ENCODE measurements at regions of chr5 and their contacts with region 1.

Region 1: DNA sequence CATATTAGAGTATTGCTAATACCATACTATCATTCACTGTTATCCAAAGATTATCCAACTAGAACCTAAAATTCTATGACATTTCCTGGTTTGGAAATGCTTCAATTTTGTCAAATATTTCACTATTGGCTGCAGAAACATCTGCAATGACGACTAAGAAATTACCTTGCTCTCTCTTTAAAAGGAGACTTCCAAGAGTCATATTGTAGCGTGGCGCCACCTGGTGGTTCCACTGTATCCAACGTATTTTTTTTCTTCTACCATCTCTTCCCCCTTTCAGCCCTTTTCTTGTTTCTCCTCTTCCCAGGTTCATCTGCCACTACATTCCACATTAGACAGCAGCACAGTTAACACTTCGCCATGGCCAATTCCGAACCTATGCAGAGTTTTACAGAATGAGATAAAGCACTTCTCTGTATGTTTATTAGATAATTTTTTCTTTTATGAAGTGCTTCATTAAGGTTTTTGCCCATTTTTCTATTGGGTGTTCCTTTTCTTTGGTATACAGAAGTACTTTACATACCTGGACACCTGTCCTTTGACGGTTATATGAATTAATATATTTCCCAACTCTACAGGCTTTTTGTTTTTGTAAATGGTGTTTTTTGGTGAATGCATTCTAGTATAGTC is 153.5 kb downstream of the CDC42SE2 start:
- DNase-seq: peak; percentile 66 to 91 (median 85)
- ATAC-seq: peak; percentile 74
- H3K4me3 ChIP-seq: no peak overlapping the region
- H3K4me3 Mint-ChIP-seq: peak overlapping the region; percentile 64
- H3K27ac ChIP-seq: peak overlapping the region in 1 of 2 experiments; percentile 32
- H3K27ac Mint-ChIP-seq: peak overlapping the region; percentile 91
- H3K4me1 ChIP-seq: peaks cover 26% of the 10 kb centered on the region
- H3K4me1 Mint-ChIP-seq: peaks cover 45% of the 10 kb centered on the region
- H3K27me3 ChIP-seq: no peaks in the 10 kb centered on the region
- H3K27me3 Mint-ChIP-seq: no peaks in the 10 kb centered on the region
- CTCF ChIP-seq: peak; percentile 95

Region 2: GRCh38 chr5:130109152-130109551 is 1308.2 kb before region 1 on chr5:
- CTCF ChIA-PET with region 1: no interaction called
- POLR2A ChIA-PET with region 1: no interaction called
- intact Hi-C with region 1: loop called in 1 of 2 experiments (anchors 2 kb)
- DNase-seq: peak in 2 of 9 experiments; percentile 15 to 26
- ATAC-seq: no peak
- H3K4me3 ChIP-seq: no peak overlapping the region
- H3K4me3 Mint-ChIP-seq: no peak overlapping the region
- H3K27ac ChIP-seq: no peak overlapping the region
- H3K27ac Mint-ChIP-seq: no peak overlapping the region
- H3K4me1 ChIP-seq: no peaks in the 10 kb centered on the region
- H3K4me1 Mint-ChIP-seq: no peaks in the 10 kb centered on the region
- H3K27me3 ChIP-seq: no peaks in the 10 kb centered on the region
- H3K27me3 Mint-ChIP-seq: no peaks in the 10 kb centered on the region
- CTCF ChIP-seq: no peak

Region 3: GRCh38 chr5:131109540-131110255 is 307.7 kb before region 1 on chr5:
- CTCF ChIA-PET with region 1: interaction called, 5 read pairs
- POLR2A ChIA-PET with region 1: no interaction called
- intact Hi-C with region 1: loop called in 1 of 2 experiments (anchors 1 kb)
- DNase-seq: peak in 5 of 9 experiments; percentile 13 to 61 (median 24)
- ATAC-seq: peak; percentile 80
- H3K4me3 ChIP-seq: no peak overlapping the region
- H3K4me3 Mint-ChIP-seq: no peak overlapping the region
- H3K27ac ChIP-seq: no peak overlapping the region
- H3K27ac Mint-ChIP-seq: no peak overlapping the region
- H3K4me1 ChIP-seq: peaks cover 3% of the 10 kb centered on the region
- H3K4me1 Mint-ChIP-seq: peaks cover 4% of the 10 kb centered on the region
- H3K27me3 ChIP-seq: no peaks in the 10 kb centered on the region
- H3K27me3 Mint-ChIP-seq: no peaks in the 10 kb centered on the region
- CTCF ChIP-seq: peak; percentile 96

Region 4: GRCh38 chr5:131209506-131210150 is 207.7 kb before region 1 on chr5:
- CTCF ChIA-PET with region 1: no interaction called
- POLR2A ChIA-PET with region 1: no interaction called
- intact Hi-C with region 1: loop called in 1 of 2 experiments (anchors 5 kb)
- DNase-seq: peak; percentile 14 to 93 (median 55)
- ATAC-seq: peak; percentile 94
- H3K4me3 ChIP-seq: peak overlapping the region; percentile 2 to 13
- H3K4me3 Mint-ChIP-seq: peak overlapping the region; percentile 72
- H3K27ac ChIP-seq: peak overlapping the region; percentile 51 to 83
- H3K27ac Mint-ChIP-seq: peak overlapping the region; percentile 97
- H3K4me1 ChIP-seq: peaks cover 61% of the 10 kb centered on the region
- H3K4me1 Mint-ChIP-seq: peaks cover 60% of the 10 kb centered on the region
- H3K27me3 ChIP-seq: no peaks in the 10 kb centered on the region
- H3K27me3 Mint-ChIP-seq: no peaks in the 10 kb centered on the region
- CTCF ChIP-seq: no peak

Region 5: DNA sequence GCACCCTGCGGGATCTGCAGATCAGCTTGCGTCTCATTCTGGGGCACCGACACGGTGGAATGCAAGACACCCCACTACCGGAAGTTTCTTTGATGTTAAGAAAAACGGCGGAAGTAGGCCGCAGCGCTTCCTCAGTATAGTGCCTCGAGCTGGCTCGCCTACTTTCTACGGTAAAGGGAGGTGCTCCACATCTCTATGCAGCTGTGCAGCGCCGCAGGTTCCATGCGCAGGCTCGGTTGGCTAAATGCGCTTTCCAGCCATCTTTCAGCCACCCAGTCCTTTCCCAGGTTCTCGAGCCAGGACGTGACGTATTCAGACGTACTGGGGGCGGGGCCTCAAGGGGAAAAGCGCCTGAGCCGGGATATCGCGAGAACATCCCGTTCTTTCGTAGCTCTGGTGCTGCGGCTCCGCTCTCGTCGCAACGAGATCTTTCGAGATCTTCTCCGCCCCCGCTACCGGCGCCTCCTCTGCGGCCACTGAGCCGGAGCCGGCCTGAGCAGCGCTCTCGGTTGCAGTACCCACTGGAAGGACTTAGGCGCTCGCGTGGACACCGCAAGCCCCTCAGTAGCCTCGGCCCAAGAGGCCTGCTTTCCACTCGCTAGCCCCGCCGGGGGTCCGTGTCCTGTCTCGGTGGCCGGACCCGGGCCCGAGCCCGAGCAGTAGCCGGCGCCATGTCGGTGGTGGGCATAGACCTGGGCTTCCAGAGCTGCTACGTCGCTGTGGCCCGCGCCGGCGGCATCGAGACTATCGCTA is 1634.4 kb after region 1 on chr5 and contains the start of gene HSPA4:
- CTCF ChIA-PET with region 1: no interaction called
- POLR2A ChIA-PET with region 1: no interaction called
- intact Hi-C with region 1: no loop called
- DNase-seq: peak; percentile 93 to 100 (median 97)
- ATAC-seq: peak; percentile 89
- H3K4me3 ChIP-seq: peak within 1 kb of the TSS; percentile 88 to 100
- H3K4me3 Mint-ChIP-seq: peak within 1 kb of the TSS; percentile 99
- H3K27ac ChIP-seq: peak within 1 kb of the TSS; percentile 97
- H3K27ac Mint-ChIP-seq: peak within 1 kb of the TSS; percentile 100
- H3K4me1 ChIP-seq: peaks cover 46% of the 10 kb centered on the region
- H3K4me1 Mint-ChIP-seq: peaks cover 56% of the 10 kb centered on the region
- H3K27me3 ChIP-seq: no peaks in the 10 kb centered on the region
- H3K27me3 Mint-ChIP-seq: no peaks in the 10 kb centered on the region
- CTCF ChIP-seq: no peak
- total RNA-seq, gene HSPA4: 24.4 to 29.7 TPM